ENCODE measurements at regions of chr17 and their contacts with region 1.

Region 1: DNA sequence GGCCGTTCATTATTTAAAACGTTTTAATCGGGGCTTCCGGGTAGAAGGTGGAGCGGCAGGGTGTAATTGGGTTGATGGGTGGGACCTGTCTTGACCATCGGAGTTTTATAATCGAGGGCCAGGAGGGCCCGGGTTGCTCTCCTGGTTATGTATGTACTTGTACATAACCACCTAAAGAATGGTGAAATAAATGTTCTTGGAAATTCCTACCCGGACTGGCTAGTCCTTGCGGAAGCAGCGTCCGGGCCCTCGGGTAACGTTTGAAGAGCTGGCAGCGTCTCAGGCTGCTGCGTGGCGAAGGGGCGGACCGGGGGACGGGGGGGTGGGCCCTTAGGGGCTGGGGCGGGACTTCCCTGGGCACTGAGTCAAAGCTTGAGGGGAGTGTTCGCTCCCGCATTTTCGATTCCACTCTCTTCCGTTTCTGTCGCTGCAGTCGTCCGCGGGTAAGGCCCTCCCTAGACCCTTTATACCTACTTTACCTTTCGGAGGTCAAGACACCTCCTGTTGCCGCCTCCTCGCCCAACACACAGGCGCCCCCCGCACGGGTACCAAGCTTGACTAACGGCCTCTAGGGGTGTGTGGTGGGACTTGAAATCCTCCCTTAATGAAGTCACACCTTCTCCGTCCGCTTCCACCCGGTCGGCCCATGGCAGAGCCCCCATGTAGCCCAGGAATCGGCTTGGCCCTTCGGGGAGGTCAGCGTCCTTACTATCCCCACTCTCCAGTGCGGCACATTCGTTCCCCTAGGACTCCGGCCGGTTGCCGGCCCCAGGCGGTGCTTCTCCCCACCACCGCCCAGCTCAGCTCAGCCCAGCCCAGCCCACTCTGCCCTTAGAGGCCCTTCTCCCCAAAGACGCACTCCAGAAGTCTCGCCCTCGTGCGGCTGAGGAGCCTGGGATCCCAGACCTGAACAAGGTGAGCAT is at the start of gene TMEM106A:
- DNase-seq: peak; percentile 83
- ATAC-seq: peak; percentile 95
- H3K4me3 Mint-ChIP-seq: peak within 1 kb of the TSS; percentile 90
- H3K27ac Mint-ChIP-seq: peak within 1 kb of the TSS; percentile 82
- H3K4me1 Mint-ChIP-seq: peaks cover 30% of the 10 kb centered on the region
- H3K27me3 Mint-ChIP-seq: no peaks in the 10 kb centered on the region
- total RNA-seq, gene TMEM106A: 10.1 to 12.4 TPM

Region 2: GRCh38 chr17:43094129-43094835 is 117.5 kb before region 1 on chr17:
- CTCF ChIA-PET with region 1: no interaction called
- POLR2A ChIA-PET with region 1: no interaction called
- DNase-seq: no peak
- ATAC-seq: no peak
- H3K4me3 Mint-ChIP-seq: no peak overlapping the region
- H3K27ac Mint-ChIP-seq: no peak overlapping the region
- H3K4me1 Mint-ChIP-seq: no peaks in the 10 kb centered on the region
- H3K27me3 Mint-ChIP-seq: no peaks in the 10 kb centered on the region

Region 3: DNA sequence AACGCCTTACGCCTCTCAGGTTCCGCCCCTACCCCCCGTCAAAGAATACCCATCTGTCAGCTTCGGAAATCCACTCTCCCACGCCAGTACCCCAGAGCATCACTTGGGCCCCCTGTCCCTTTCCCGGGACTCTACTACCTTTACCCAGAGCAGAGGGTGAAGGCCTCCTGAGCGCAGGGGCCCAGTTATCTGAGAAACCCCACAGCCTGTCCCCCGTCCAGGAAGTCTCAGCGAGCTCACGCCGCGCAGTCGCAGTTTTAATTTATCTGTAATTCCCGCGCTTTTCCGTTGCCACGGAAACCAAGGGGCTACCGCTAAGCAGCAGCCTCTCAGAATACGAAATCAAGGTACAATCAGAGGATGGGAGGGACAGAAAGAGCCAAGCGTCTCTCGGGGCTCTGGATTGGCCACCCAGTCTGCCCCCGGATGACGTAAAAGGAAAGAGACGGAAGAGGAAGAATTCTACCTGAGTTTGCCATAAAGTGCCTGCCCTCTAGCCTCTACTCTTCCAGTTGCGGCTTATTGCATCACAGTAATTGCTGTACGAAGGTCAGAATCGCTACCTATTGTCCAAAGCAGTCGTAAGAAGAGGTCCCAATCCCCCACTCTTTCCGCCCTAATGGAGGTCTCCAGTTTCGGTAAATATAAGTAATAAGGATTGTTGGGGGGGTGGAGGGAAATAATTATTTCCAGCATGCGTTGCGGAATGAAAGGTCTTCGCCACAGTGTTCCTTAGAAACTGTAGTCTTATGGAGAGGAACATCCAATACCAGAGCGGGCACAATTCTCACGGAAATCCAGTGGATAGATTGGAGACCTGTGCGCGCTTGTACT is 86.4 kb before region 1 on chr17 and contains the start of gene BRCA1:
- CTCF ChIA-PET with region 1: no interaction called
- POLR2A ChIA-PET with region 1: interaction called, 10 read pairs
- DNase-seq: peak; percentile 98
- ATAC-seq: peak; percentile 98
- H3K4me3 Mint-ChIP-seq: peak within 1 kb of the TSS; percentile 99
- H3K27ac Mint-ChIP-seq: peak within 1 kb of the TSS; percentile 98
- H3K4me1 Mint-ChIP-seq: peaks cover 39% of the 10 kb centered on the region
- H3K27me3 Mint-ChIP-seq: no peaks in the 10 kb centered on the region
- total RNA-seq, gene BRCA1: 77.2 to 85.3 TPM

Region 4: GRCh38 chr17:43155666-43156065 is 56.1 kb before region 1 on chr17:
- CTCF ChIA-PET with region 1: no interaction called
- POLR2A ChIA-PET with region 1: no interaction called
- DNase-seq: no peak
- ATAC-seq: no peak
- H3K4me3 Mint-ChIP-seq: no peak overlapping the region
- H3K27ac Mint-ChIP-seq: no peak overlapping the region
- H3K4me1 Mint-ChIP-seq: no peaks in the 10 kb centered on the region
- H3K27me3 Mint-ChIP-seq: no peaks in the 10 kb centered on the region

Region 5: GRCh38 chr17:43170766-43171585 is 40.8 kb before region 1 on chr17 and contains the start of gene NBR1:
- CTCF ChIA-PET with region 1: interaction called, 6 read pairs
- POLR2A ChIA-PET with region 1: interaction called, 19 read pairs
- DNase-seq: peak; percentile 98
- ATAC-seq: peak; percentile 88
- H3K4me3 Mint-ChIP-seq: no peak within 1 kb of the TSS
- H3K27ac Mint-ChIP-seq: no peak within 1 kb of the TSS
- H3K4me1 Mint-ChIP-seq: peaks cover 35% of the 10 kb centered on the region
- H3K27me3 Mint-ChIP-seq: no peaks in the 10 kb centered on the region
- total RNA-seq, gene NBR1: 40.9 to 41.3 TPM

Measured in activated CD8-positive, alpha-beta T cell treated with anti-CD3 and anti-CD28 coated beads, Interleukin-2, amount 10 ng/mL, durations not matched to agents 7 days and 5 days (primary cell).